GM12878 (cell line): ENCODE measurements at regions of chr19 and their contacts with region 1.

Region 1: GRCh38 chr19:7177926-7178325 is 108.4 kb downstream of the ZNF557 start:
- DNase-seq: no peak
- ATAC-seq: no peak
- H3K4me3 ChIP-seq: no peak overlapping the region
- H3K27ac ChIP-seq: no peak overlapping the region
- H3K4me1 ChIP-seq: peaks cover 41% of the 10 kb centered on the region
- H3K27me3 ChIP-seq: no peaks in the 10 kb centered on the region
- CTCF ChIP-seq: no peak
- EP300 ChIP-seq: no peak
- POLR2A ChIP-seq: no peak
- RAD21 ChIP-seq: no peak

Region 2: GRCh38 chr19:7191946-7192691 is 14.2 kb after region 1 on chr19:
- CTCF ChIA-PET with region 1: interaction called, 11 read pairs
- POLR2A ChIA-PET with region 1: interaction called, 21 read pairs
- RAD21 ChIA-PET with region 1: interaction called, 20 read pairs
- SMC1A ChIA-PET with region 1: interaction called, 52 read pairs
- in situ Hi-C with region 1: no loop called
- intact Hi-C with region 1: no loop called
- DNase-seq: no peak
- ATAC-seq: peak; percentile 83
- H3K4me3 ChIP-seq: 0 out of 2 replicates have a peak overlapping the region, but pooled peaks have one; percentile 37
- H3K27ac ChIP-seq: peak overlapping the region; percentile 74
- H3K4me1 ChIP-seq: peaks cover 39% of the 10 kb centered on the region
- H3K27me3 ChIP-seq: no peaks in the 10 kb centered on the region
- CTCF ChIP-seq: no peak
- EP300 ChIP-seq: peak; percentile 70 to 71; a peak in 3 of 4 replicates
- POLR2A ChIP-seq: peak; percentile 45; the same call in 1 of the 2 replicates
- RAD21 ChIP-seq: no peak

Region 3: DNA sequence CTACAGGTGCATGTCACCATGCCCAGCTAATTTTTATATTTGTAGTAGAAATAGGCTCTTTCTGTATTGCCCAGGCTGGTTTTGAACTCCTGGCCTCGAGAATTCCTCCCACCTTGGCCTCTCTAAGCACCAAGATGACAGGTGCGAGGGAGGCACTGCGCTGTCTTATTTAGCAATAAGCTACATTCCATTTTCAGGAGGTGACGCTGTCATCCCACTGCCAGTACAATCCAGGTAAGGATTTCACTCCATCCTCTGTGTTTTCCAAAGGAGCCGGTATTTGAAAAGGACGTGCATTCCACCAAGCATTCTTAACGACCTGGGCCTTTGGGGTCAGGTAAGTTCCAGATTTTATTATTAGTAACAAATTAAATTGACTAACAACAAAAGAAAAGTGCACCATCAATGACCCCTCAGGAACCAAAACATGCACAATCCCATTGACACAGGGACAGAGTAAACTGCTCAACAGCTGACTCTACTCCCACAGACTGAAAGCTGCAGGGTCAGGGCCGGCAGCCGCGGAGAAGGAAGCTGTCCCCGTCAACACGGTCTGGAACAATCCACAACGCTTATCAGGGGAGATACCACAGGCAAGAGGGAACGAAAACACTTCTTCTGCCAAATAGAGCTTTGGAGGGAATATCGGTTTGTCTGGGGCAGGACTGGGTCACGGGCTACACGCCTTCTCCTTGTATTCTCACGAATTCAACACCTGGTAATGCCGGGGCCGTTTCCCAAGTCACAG is 33.5 kb after region 1 on chr19:
- CTCF ChIA-PET with region 1: interaction called, 3 read pairs
- POLR2A ChIA-PET with region 1: interaction called, 4 read pairs
- RAD21 ChIA-PET with region 1: interaction called, 6 read pairs
- SMC1A ChIA-PET with region 1: interaction called, 10 read pairs
- in situ Hi-C with region 1: no loop called
- intact Hi-C with region 1: no loop called
- DNase-seq: no peak
- ATAC-seq: no peak
- H3K4me3 ChIP-seq: no peak overlapping the region
- H3K27ac ChIP-seq: no peak overlapping the region
- H3K4me1 ChIP-seq: peaks cover 55% of the 10 kb centered on the region
- H3K27me3 ChIP-seq: no peaks in the 10 kb centered on the region
- CTCF ChIP-seq: no peak
- EP300 ChIP-seq: no peak
- POLR2A ChIP-seq: no peak
- RAD21 ChIP-seq: no peak

Region 4: DNA sequence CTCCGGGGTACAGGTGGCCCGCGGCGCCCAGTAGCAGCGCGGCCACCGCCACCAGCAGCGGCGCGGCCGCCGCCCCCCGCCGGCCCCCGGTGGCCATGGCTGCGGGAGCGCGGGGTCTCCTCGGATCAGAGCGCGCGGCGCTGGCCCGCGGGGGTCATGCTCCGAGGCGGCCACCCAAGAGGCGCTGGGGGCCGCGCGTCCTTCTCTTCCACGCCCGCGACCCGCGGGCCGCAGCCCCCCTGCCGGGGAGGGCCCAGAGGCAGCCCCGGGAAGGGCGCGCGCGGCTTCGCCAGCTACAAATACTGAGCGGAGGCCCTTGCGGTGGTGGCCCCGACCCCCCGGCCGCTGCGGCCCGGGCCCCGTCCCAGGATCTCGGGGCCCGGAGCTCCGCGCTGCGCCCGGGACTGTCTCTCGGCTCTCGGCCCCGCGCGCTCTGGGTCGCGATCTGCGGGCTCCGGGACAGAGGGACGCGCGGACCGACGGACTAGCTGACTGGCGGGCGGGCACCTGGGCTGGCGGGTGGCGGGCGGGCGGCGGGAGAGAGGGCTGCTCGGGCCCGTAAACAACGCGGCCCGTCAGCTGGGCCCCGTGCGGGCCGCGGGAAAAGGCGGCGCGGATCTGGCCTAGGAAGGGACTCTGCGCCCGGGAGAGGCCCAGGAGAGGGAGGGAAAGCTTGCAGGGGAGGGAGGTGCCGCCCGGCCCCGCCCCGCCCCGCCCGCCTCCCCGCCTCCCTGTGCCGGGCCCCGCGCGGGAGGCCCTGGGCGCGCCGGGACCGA is 116.1 kb after region 1 on chr19 and contains the start of gene INSR:
- CTCF ChIA-PET with region 1: interaction called, 6 read pairs
- POLR2A ChIA-PET with region 1: interaction called, 7 read pairs
- RAD21 ChIA-PET with region 1: interaction called, 14 read pairs
- SMC1A ChIA-PET with region 1: interaction called, 10 read pairs
- in situ Hi-C with region 1: no loop called
- intact Hi-C with region 1: no loop called
- DNase-seq: peak; percentile 54
- ATAC-seq: peak; percentile 82
- H3K4me3 ChIP-seq: peak within 1 kb of the TSS; percentile 94
- H3K27ac ChIP-seq: peak within 1 kb of the TSS; percentile 74
- H3K4me1 ChIP-seq: peaks cover 13% of the 10 kb centered on the region
- H3K27me3 ChIP-seq: no peaks in the 10 kb centered on the region
- CTCF ChIP-seq: no peak
- EP300 ChIP-seq: no peak
- POLR2A ChIP-seq: peak; percentile 66
- RAD21 ChIP-seq: peak; percentile 19; the same call in 1 of the 2 replicates
- polyA plus RNA-seq, gene INSR: 4.2 to 8.0 TPM

Region 5: GRCh38 chr19:7333198-7334118 is 155.5 kb after region 1 on chr19:
- CTCF ChIA-PET with region 1: interaction called, 3 read pairs
- POLR2A ChIA-PET with region 1: interaction called, 21 read pairs
- RAD21 ChIA-PET with region 1: interaction called, 15 read pairs
- SMC1A ChIA-PET with region 1: interaction called, 13 read pairs
- in situ Hi-C with region 1: no loop called
- intact Hi-C with region 1: loop called (anchors 1 kb)
- DNase-seq: peak; percentile 92
- ATAC-seq: peak; percentile 60
- H3K4me3 ChIP-seq: no peak overlapping the region
- H3K27ac ChIP-seq: peak overlapping the region; percentile 75
- H3K4me1 ChIP-seq: peaks cover 37% of the 10 kb centered on the region
- H3K27me3 ChIP-seq: no peaks in the 10 kb centered on the region
- CTCF ChIP-seq: no peak
- EP300 ChIP-seq: peak; percentile 9 to 26; a peak in 1 of 4 replicates
- POLR2A ChIP-seq: no peak
- RAD21 ChIP-seq: no peak

Region 6: GRCh38 chr19:7348587-7349230 is 170.8 kb after region 1 on chr19 and contains the start of gene ARHGEF18:
- CTCF ChIA-PET with region 1: interaction called, 4 read pairs
- POLR2A ChIA-PET with region 1: interaction called, 10 read pairs
- RAD21 ChIA-PET with region 1: interaction called, 7 read pairs
- SMC1A ChIA-PET with region 1: interaction called, 9 read pairs
- in situ Hi-C with region 1: no loop called
- intact Hi-C with region 1: no loop called
- DNase-seq: peak; percentile 59
- ATAC-seq: peak; percentile 60
- H3K4me3 ChIP-seq: peak within 1 kb of the TSS; percentile 43; the same call in 1 of the 2 replicates
- H3K27ac ChIP-seq: peak within 1 kb of the TSS; percentile 77
- H3K4me1 ChIP-seq: peaks cover 58% of the 10 kb centered on the region
- H3K27me3 ChIP-seq: no peaks in the 10 kb centered on the region
- CTCF ChIP-seq: no peak
- EP300 ChIP-seq: peak in 1 of 2 experiments; percentile 36; a peak in 1 of 4 replicates
- POLR2A ChIP-seq: peak; percentile 72; the same call in 1 of the 2 replicates
- RAD21 ChIP-seq: no peak
- polyA plus RNA-seq, gene ARHGEF18: 0.31 to 0.57 TPM